ENCODE measurements at regions of chr3 and their contacts with region 1.

Region 1: GRCh38 chr3:109023656-109024254 is 70.1 kb upstream of the GUCA1C start:
- DNase-seq: peak; percentile 19
- ATAC-seq: peak; percentile 91
- H3K4me3 ChIP-seq: no peak overlapping the region
- H3K27ac ChIP-seq: no peak overlapping the region
- H3K4me1 ChIP-seq: no peaks in the 10 kb centered on the region
- H3K27me3 ChIP-seq: no peaks in the 10 kb centered on the region
- CTCF ChIP-seq: peak; percentile 59 to 75 (median 68)
- EP300 ChIP-seq: no peak
- POLR2A ChIP-seq: no peak
- RAD21 ChIP-seq: peak; percentile 79

Region 2: DNA sequence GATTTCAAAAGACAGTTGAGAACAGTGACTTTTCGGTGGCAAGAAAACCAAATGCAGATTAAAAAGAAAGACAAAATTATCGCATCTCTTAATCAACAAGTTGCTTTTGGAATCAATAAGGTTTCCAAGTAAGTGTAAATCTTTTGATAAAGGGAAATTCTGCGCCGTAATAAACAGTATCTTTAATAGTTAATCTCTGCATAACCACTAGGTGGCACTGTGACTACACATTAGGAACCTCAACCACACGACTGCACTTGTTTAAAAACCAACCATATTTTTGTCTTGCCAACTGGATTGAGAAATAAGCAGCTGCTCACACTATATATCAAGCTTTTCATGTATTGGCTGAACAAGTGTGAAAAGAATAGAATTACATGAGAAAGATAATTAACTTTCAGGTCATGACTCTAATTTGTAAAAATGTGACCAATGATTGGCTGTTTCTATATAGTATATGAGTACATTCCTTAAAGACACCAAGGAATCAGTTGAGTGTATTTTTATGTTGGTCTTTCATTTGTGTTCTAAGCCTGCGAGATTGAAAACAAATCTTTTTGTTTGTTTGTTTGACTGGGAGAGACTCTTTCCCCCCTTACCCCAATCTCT is 361.5 kb before region 1 on chr3:
- CTCF ChIA-PET with region 1: interaction called, 6 read pairs
- POLR2A ChIA-PET with region 1: no interaction called
- RAD21 ChIA-PET with region 1: interaction called, 6 read pairs
- SMC1A ChIA-PET with region 1: interaction called, 3 read pairs
- in situ Hi-C with region 1: no loop called
- intact Hi-C with region 1: loop called (anchors 2 kb)
- DNase-seq: peak; percentile 11
- ATAC-seq: peak; percentile 89
- H3K4me3 ChIP-seq: no peak overlapping the region
- H3K27ac ChIP-seq: no peak overlapping the region
- H3K4me1 ChIP-seq: no peaks in the 10 kb centered on the region
- H3K27me3 ChIP-seq: no peaks in the 10 kb centered on the region
- CTCF ChIP-seq: peak; percentile 63 to 77 (median 68)
- EP300 ChIP-seq: no peak
- POLR2A ChIP-seq: no peak
- RAD21 ChIP-seq: peak; percentile 91

Region 3: GRCh38 chr3:109050591-109051167 is 26.9 kb after region 1 on chr3:
- CTCF ChIA-PET with region 1: interaction called, 25 read pairs
- POLR2A ChIA-PET with region 1: no interaction called
- RAD21 ChIA-PET with region 1: interaction called, 20 read pairs
- SMC1A ChIA-PET with region 1: interaction called, 7 read pairs
- in situ Hi-C with region 1: no loop called
- intact Hi-C with region 1: no loop called
- DNase-seq: no peak
- ATAC-seq: peak; percentile 80
- H3K4me3 ChIP-seq: no peak overlapping the region
- H3K27ac ChIP-seq: no peak overlapping the region
- H3K4me1 ChIP-seq: no peaks in the 10 kb centered on the region
- H3K27me3 ChIP-seq: no peaks in the 10 kb centered on the region
- CTCF ChIP-seq: peak; percentile 57 to 80 (median 64)
- EP300 ChIP-seq: no peak
- POLR2A ChIP-seq: no peak
- RAD21 ChIP-seq: peak; percentile 69

Region 4: DNA sequence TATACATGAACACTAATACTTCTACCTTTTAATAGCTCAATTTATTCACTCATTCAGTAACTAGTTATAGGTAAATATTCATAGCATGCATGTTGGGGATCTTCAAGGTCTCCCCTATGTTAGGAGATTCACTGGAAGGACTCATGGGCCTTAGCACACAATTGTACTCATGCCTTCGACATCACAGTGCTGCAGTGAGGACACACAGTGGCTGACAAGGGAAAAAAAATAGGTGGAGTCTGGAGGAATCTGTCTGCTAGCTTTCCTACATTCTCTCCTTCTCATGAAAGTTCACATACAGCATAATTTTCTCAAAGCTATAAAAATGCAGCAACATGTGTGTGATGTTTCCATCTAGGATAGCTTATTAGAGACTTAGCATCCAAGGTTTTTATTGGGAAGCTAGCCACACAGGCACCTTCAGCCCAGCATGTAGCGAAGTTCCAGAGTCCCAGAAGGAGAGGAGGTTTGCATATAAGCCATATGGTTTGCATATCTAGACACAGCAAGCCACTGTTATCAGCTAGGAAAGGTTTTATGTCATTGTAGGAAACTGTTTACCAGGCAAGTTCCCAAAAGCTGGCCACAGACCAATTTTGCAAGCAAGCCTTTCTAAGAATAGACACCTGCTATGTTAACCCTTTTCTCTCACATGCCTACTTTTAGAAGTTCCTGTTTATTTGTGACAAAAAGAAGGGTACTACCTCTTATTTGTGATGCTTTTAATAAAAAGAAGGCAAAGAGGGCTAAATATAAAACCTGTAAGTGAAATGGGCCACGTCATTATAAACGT is 47.8 kb after region 1 on chr3:
- CTCF ChIA-PET with region 1: interaction called, 33 read pairs
- POLR2A ChIA-PET with region 1: no interaction called
- RAD21 ChIA-PET with region 1: interaction called, 9 read pairs
- SMC1A ChIA-PET with region 1: interaction called, 36 read pairs
- in situ Hi-C with region 1: no loop called
- intact Hi-C with region 1: no loop called
- DNase-seq: no peak
- ATAC-seq: peak; percentile 68
- H3K4me3 ChIP-seq: peak overlapping the region; percentile 20
- H3K27ac ChIP-seq: no peak overlapping the region
- H3K4me1 ChIP-seq: peaks cover 13% of the 10 kb centered on the region
- H3K27me3 ChIP-seq: no peaks in the 10 kb centered on the region
- CTCF ChIP-seq: peak in 2 of 3 experiments; percentile 7 to 18; a peak in 1 of 6 replicates
- EP300 ChIP-seq: no peak
- POLR2A ChIP-seq: no peak
- RAD21 ChIP-seq: 0 out of 2 replicates have a peak, but pooled peaks have one; percentile 8

Region 5: GRCh38 chr3:109091846-109092245 is 68.1 kb after region 1 on chr3:
- CTCF ChIA-PET with region 1: interaction called, 25 read pairs
- POLR2A ChIA-PET with region 1: no interaction called
- RAD21 ChIA-PET with region 1: no interaction called
- SMC1A ChIA-PET with region 1: interaction called, 17 read pairs
- in situ Hi-C with region 1: no loop called
- intact Hi-C with region 1: no loop called
- DNase-seq: no peak
- ATAC-seq: no peak
- H3K4me3 ChIP-seq: no peak overlapping the region
- H3K27ac ChIP-seq: no peak overlapping the region
- H3K4me1 ChIP-seq: no peaks in the 10 kb centered on the region
- H3K27me3 ChIP-seq: no peaks in the 10 kb centered on the region
- CTCF ChIP-seq: no peak
- EP300 ChIP-seq: no peak
- POLR2A ChIP-seq: no peak
- RAD21 ChIP-seq: no peak

Region 6: GRCh38 chr3:109224333-109224732 is 200.6 kb after region 1 on chr3:
- CTCF ChIA-PET with region 1: interaction called, 18 read pairs
- POLR2A ChIA-PET with region 1: no interaction called
- RAD21 ChIA-PET with region 1: interaction called, 12 read pairs
- SMC1A ChIA-PET with region 1: interaction called, 6 read pairs
- in situ Hi-C with region 1: no loop called
- intact Hi-C with region 1: loop called (anchors 10 kb)
- DNase-seq: no peak
- ATAC-seq: peak; percentile 64
- H3K4me3 ChIP-seq: no peak overlapping the region
- H3K27ac ChIP-seq: no peak overlapping the region
- H3K4me1 ChIP-seq: no peaks in the 10 kb centered on the region
- H3K27me3 ChIP-seq: no peaks in the 10 kb centered on the region
- CTCF ChIP-seq: peak in 2 of 3 experiments; percentile 14 to 38; a peak in 2 of 6 replicates
- EP300 ChIP-seq: no peak
- POLR2A ChIP-seq: no peak
- RAD21 ChIP-seq: no peak

Measured in GM12878 (cell line).